ENCODE measurements at regions of chr1 and their contacts with region 1.

Region 1: DNA sequence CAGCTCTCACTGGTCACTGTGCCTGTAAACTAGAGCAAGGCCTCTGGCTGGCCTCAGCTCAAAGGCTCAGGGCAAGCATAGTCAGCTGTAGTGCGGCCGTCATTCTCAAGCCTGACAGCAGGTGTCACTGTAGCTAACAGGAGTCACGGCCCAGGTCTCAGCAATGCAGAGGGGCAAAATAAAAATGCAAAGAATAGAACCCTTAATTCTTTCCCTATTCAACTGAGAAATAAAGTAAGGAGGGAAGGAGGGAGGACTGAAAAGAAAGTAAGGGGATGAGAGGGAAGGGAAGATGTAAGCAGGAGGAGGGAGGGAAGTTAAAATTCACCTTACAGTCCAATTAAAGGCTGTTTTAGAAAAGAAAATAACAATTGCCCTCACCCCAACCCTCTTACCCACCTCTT is 106.1 kb downstream of the KIAA0319L start:
- DNase-seq: peak; percentile 85
- H3K4me3 Mint-ChIP-seq: no peak overlapping the region
- H3K27ac Mint-ChIP-seq: no peak overlapping the region
- H3K4me1 Mint-ChIP-seq: peaks cover 50% of the 10 kb centered on the region
- H3K27me3 Mint-ChIP-seq: no peaks in the 10 kb centered on the region

Region 2: DNA sequence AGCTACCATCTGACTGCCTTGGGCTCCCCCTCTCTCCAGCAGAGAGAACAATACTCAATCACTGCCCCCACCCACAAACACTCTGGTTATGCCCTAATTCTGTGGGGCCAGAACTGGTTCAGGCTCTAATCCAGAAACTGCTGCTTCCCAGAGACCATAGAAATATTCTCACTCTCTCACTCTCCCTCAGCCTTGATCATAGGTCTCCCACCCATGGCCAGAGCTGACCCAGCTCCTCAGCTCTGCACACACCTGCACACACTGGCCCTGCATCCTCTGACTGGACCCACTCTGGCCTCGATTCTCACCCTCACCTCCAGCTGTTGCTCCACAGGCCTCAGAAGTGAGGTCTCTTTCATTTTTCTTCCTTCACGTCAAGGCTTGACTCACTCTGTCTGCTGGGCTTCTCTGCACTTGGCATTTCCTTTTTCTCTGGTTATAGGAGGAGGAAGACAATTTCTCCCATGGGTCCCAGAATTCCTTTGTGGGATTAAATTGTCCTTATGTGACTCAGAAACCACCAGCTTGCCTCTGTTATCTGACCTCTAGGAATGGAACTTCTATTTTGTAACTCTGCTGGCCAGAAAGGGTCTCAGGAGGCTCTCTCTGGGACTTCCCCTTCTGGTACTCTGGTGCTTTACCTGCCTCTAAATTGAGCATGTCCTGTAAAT is 403.8 kb before region 1 on chr1:
- CTCF ChIA-PET with region 1: no interaction called
- POLR2A ChIA-PET with region 1: no interaction called
- intact Hi-C with region 1: no loop called
- DNase-seq: no peak
- H3K4me3 Mint-ChIP-seq: no peak overlapping the region
- H3K27ac Mint-ChIP-seq: no peak overlapping the region
- H3K4me1 Mint-ChIP-seq: no peaks in the 10 kb centered on the region
- H3K27me3 Mint-ChIP-seq: no peaks in the 10 kb centered on the region

Region 3: GRCh38 chr1:35431173-35431599 is 19.9 kb before region 1 on chr1:
- CTCF ChIA-PET with region 1: interaction called, 23 read pairs
- POLR2A ChIA-PET with region 1: interaction called, 4 read pairs
- intact Hi-C with region 1: no loop called
- DNase-seq: no peak
- H3K4me3 Mint-ChIP-seq: no peak overlapping the region
- H3K27ac Mint-ChIP-seq: peak overlapping the region; percentile 81
- H3K4me1 Mint-ChIP-seq: peaks cover 29% of the 10 kb centered on the region
- H3K27me3 Mint-ChIP-seq: no peaks in the 10 kb centered on the region

Region 4: DNA sequence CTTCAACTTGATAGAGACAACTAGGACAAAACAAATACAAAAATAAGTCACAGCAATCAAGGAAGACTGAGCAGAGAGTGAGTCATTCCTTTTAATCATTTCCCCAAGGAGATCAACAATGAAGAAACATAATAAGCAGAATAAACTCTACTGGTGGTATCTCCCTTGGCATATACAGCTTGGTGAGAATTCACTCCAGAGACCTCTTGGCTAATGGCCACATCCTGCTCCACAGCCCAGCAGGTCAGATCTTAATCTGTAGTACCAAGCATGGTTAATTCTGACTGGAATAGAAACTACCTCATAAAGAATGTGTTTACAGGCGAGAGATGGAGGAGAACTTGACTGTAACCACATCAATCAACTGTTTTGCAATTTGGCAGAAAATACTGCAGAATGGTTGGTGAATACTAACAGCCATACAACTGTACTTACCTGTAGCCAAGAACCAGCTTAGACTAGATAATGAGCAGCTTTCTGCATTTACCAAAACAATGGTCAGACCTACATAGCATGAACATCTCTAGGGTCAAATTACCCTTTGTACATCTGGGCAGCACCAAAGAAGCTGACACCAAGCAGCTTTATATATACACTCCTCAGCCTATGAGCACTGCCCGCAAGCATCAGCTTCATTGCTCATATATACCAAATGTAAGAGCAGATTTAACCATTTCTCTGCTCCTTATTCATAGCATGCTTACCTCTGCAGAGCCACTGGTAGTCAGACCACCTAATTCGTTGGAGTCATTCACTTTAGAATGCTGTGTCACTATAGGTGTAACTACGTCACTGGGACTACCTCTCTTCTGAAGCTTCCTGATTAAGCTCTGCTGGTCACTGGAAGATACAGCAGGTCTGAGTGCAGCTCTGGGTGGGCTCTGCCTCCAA is 55.0 kb after region 1 on chr1:
- CTCF ChIA-PET with region 1: interaction called, 23 read pairs
- POLR2A ChIA-PET with region 1: interaction called, 6 read pairs
- intact Hi-C with region 1: loop called (anchors 1 kb)
- DNase-seq: peak; percentile 77
- H3K4me3 Mint-ChIP-seq: peak overlapping the region; percentile 28
- H3K27ac Mint-ChIP-seq: peak overlapping the region; percentile 81
- H3K4me1 Mint-ChIP-seq: peaks cover 62% of the 10 kb centered on the region
- H3K27me3 Mint-ChIP-seq: no peaks in the 10 kb centered on the region

Region 5: DNA sequence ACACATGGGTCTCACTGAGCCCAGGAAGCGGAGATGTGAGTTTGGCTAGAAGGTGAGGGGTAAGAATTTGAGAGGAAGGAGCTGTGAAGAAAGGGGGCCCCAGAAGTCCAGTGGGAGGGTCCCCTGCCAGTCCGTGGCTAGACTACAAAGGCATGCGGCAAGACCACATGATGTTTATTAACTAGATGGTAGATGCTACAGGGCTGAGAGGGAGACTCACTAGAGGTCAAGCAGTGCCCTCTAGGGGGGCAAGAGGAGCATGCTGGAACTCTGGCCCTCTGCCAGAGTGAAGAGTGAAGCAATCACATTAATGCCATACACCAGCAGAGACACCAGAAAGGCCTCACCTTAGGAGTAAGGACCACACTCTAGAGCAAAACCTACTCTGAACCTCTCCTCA is 93.9 kb after region 1 on chr1:
- CTCF ChIA-PET with region 1: interaction called, 74 read pairs
- POLR2A ChIA-PET with region 1: interaction called, 3 read pairs
- intact Hi-C with region 1: loop called (anchors 1 kb)
- DNase-seq: peak; percentile 69
- H3K4me3 Mint-ChIP-seq: no peak overlapping the region
- H3K27ac Mint-ChIP-seq: no peak overlapping the region
- H3K4me1 Mint-ChIP-seq: peaks cover 49% of the 10 kb centered on the region
- H3K27me3 Mint-ChIP-seq: no peaks in the 10 kb centered on the region

Region 6: GRCh38 chr1:35641233-35641866 is 190.2 kb after region 1 on chr1 and contains the start of gene PSMB2:
- CTCF ChIA-PET with region 1: no interaction called
- POLR2A ChIA-PET with region 1: no interaction called
- intact Hi-C with region 1: loop called (anchors 10 kb)
- DNase-seq: peak; percentile 98
- H3K4me3 Mint-ChIP-seq: peak within 1 kb of the TSS; percentile 100
- H3K27ac Mint-ChIP-seq: peak within 1 kb of the TSS; percentile 100
- H3K4me1 Mint-ChIP-seq: peaks cover 29% of the 10 kb centered on the region
- H3K27me3 Mint-ChIP-seq: peaks cover 14% of the 10 kb centered on the region
- total RNA-seq, gene PSMB2: 88.1 to 91.5 TPM

Region 7: GRCh38 chr1:35656148-35656862 is 205.2 kb after region 1 on chr1:
- CTCF ChIA-PET with region 1: no interaction called
- POLR2A ChIA-PET with region 1: no interaction called
- intact Hi-C with region 1: no loop called
- DNase-seq: no peak
- H3K4me3 Mint-ChIP-seq: no peak overlapping the region
- H3K27ac Mint-ChIP-seq: no peak overlapping the region
- H3K4me1 Mint-ChIP-seq: no peaks in the 10 kb centered on the region
- H3K27me3 Mint-ChIP-seq: peaks cover 5% of the 10 kb centered on the region

Region 8: DNA sequence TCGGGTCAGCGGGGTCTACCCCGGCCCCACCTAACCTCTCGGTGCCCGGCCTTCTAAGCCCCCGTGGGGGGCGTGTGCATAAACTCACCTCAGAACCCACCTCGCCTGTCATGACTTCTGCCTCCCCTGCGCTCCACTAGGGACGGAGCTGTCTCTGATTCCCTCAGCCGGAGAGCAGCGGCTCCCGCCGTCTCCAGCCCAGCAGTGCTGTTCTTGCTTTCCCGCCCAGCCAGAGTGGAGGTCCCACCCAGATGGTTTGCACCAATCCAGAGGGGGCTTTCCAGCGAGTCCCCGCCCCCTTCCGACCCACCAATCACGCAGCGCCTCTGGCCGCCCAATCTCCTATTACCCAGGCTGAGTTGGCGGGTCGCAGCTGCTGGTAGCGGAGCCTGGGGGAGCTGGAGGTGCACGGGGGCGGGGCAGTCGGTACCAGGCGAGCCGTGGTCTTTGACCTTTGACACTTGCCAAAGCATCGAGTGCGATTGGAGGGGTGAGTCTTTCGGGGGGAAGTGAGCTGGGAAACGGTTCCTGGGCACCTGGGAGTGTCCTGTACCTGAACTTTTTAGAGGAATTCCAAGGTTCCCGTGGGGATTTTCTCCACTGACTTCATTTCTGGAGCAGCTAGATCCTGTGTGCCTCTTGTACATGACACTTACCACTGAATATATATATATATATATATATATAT is 318.8 kb after region 1 on chr1 and contains the start of gene CLSPN:
- CTCF ChIA-PET with region 1: interaction called, 25 read pairs
- POLR2A ChIA-PET with region 1: interaction called, 3 read pairs
- intact Hi-C with region 1: loop called (anchors 2 kb)
- DNase-seq: peak; percentile 98
- H3K4me3 Mint-ChIP-seq: peak within 1 kb of the TSS; percentile 92
- H3K27ac Mint-ChIP-seq: peak within 1 kb of the TSS; percentile 97
- H3K4me1 Mint-ChIP-seq: peaks cover 8% of the 10 kb centered on the region
- H3K27me3 Mint-ChIP-seq: no peaks in the 10 kb centered on the region
- total RNA-seq, gene CLSPN: 49.9 to 55.1 TPM

Measured in activated CD4-positive, alpha-beta memory T cell treated with anti-CD3 and anti-CD28 coated beads for 36 hours (primary cell).